Activated CD8-positive, alpha-beta memory T cell treated with anti-CD3 and anti-CD28 coated beads, Interleukin-2, amount 10 ng/mL, durations not matched to agents 7 days and 5 days (primary cell): ENCODE measurements at regions of chr2 and their contacts with region 1.

Region 1: DNA sequence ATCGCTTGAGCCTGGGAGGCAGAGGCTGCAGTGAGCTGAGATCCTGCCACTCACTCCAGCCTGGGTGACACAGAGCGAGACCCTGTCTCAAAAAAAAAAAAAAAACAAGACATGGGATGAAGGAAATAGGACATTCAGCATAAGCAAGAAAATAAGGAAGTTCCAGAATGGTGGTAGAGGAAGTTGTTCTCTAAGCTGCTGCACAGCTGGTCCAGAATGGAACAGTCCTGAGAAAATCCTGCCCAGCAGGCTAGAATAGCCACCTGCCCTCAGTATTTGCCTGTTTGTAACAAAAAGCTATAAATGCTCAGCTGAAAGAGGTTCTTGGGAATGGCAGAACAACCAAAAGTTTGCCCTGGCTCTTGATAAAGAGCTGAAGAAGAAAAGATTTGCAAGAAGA is 11.1 kb upstream of the MAPRE3 start:
- DNase-seq: no peak
- ATAC-seq: no peak
- H3K4me3 Mint-ChIP-seq: no peak overlapping the region
- H3K27ac Mint-ChIP-seq: no peak overlapping the region
- H3K4me1 Mint-ChIP-seq: no peaks in the 10 kb centered on the region
- H3K27me3 Mint-ChIP-seq: peaks cover 55% of the 10 kb centered on the region

Region 2: GRCh38 chr2:26911911-26912861 is 47.1 kb before region 1 on chr2:
- CTCF ChIA-PET with region 1: no interaction called
- DNase-seq: no peak
- ATAC-seq: no peak
- H3K4me3 Mint-ChIP-seq: no peak overlapping the region
- H3K27ac Mint-ChIP-seq: no peak overlapping the region
- H3K4me1 Mint-ChIP-seq: no peaks in the 10 kb centered on the region
- H3K27me3 Mint-ChIP-seq: peaks cover 39% of the 10 kb centered on the region

Region 3: DNA sequence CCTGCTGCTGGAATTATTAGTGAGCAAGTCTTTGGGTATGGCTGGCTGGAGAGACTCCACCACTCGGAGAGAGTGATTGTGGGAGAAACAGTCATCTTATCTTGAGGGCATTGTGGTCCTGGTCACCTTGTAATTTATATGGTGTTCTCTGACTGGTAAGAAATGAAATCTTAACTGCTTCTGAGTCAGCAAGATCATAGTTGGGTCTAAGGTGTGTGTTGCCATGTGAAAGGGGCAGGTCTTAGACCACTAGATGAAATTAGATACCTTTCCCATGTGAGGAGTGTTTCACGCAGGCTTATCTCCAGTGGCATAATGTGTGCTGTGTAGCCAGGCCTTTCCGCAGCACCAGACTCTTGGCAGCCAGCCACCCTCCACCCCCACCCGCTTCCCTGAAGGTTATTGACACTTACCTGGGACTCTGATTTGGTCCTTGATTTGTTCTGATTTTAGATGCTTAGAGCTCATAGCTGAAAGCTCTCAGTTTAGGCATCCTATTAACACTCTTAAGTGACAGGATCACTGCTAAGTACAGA is 18.8 kb after region 1 on chr2:
- CTCF ChIA-PET with region 1: interaction called, 16 read pairs
- DNase-seq: peak; percentile 27
- ATAC-seq: no peak
- H3K4me3 Mint-ChIP-seq: no peak overlapping the region
- H3K27ac Mint-ChIP-seq: no peak overlapping the region
- H3K4me1 Mint-ChIP-seq: peaks cover 2% of the 10 kb centered on the region
- H3K27me3 Mint-ChIP-seq: peaks cover 14% of the 10 kb centered on the region

Region 4: GRCh38 chr2:27191053-27191829 is 231.9 kb after region 1 on chr2:
- CTCF ChIA-PET with region 1: interaction called, 10 read pairs
- DNase-seq: peak; percentile 70
- ATAC-seq: peak; percentile 91
- H3K4me3 Mint-ChIP-seq: no peak overlapping the region
- H3K27ac Mint-ChIP-seq: no peak overlapping the region
- H3K4me1 Mint-ChIP-seq: peaks cover 2% of the 10 kb centered on the region
- H3K27me3 Mint-ChIP-seq: peaks cover 18% of the 10 kb centered on the region